Right cardiac atrium (tissue), 5 donors: ENCODE measurements at regions of chr18 and their contacts with region 1.

Region 1: DNA sequence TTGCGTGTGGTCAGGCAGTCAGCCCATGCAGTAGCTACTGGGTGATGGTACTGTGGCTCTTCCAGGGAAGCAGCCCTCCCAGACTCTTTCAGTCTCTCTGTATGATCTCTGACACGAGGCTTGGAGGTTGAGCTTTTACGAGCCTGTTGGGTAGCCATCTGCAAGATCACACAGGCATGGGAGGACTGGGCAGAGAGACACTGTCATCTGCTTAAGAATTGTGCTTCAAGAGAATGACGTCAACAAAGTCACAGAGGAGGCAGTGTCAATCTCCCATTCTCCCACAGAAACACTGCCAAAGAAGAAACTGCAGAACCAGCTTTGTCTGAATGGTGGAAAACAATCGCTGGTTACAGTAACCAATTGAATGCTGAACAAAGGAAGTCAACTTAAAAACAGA is 78.4 kb upstream of the MC2R start:
- DNase-seq: no peak
- ATAC-seq: no peak
- H3K4me3 ChIP-seq: no peak overlapping the region
- H3K27ac ChIP-seq: no peak overlapping the region
- H3K4me1 ChIP-seq: no peaks in the 10 kb centered on the region
- H3K27me3 ChIP-seq: no peaks in the 10 kb centered on the region

Region 2: DNA sequence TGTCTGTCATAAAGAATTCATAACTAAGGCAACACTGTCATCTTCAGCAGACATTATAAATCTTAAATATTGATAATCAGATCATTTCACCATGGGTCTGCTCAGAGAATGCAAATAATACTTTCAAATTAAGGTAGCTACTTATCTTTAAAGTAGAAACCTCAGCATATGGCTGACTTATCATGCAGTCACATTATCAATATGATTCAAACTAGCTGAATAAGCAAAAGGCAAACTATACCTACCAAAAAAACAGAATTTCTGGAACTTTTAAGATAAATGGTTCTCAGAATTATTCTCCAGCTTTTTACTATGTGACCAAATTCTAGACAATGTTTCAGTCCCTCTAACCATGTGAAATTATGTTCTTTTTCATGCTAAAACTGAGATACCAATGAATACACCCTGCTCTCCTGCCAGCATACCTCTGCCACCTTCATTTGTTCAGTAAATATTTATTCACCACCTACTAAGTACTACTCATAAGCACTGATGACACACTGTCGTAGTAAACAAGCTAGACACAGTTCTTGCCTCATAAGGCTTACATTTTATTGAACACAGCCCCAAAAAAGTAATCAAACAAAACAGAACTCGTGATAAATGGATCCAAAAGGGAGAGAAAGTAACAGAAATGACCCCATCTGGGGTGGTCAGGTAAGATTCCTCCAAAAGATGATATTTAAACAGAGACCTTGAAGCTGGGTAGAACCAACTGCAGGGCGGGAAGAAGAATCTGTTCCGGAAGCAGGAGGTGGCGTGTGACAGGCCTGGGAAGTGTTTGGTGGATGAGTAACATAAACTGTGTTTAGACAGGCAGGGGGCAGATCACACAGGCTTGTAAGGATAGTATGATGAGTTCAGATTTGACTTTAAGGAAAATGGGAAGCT is 1353.5 kb before region 1 on chr18:
- intact Hi-C with region 1: no loop called
- DNase-seq: peak in 1 of 3 donors; percentile 51
- ATAC-seq: peak; percentile 77 to 81
- H3K4me3 ChIP-seq: no peak overlapping the region
- H3K27ac ChIP-seq: peak overlapping the region; percentile 94
- H3K4me1 ChIP-seq: peaks cover 6% of the 10 kb centered on the region
- H3K27me3 ChIP-seq: no peaks in the 10 kb centered on the region

Region 3: DNA sequence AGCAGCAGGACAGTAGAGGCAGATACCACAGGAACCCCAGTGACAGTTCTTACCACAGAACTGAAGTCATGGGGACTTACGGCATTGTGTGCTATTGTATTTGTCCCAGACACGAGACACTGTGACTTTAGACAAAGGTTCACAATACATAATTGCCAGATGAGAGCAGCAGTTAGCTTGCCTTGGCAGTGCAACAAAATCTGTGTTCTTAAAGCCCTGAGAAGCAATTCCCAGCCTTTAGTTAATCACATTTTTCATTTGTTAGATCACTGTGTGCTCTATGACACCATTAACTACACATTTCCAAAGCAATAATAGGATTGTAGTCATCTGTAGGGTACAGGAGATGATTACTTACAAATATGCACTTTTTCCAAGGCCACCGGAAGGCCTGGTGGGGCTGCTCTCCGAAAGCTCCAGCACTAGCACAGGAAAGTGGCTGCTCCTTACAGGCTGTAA is 872.7 kb before region 1 on chr18:
- intact Hi-C with region 1: loop called in 1 of 4 experiments (anchors 10 kb)
- DNase-seq: no peak
- ATAC-seq: peak in 1 of 2 donors; percentile 26
- H3K4me3 ChIP-seq: no peak overlapping the region
- H3K27ac ChIP-seq: no peak overlapping the region
- H3K4me1 ChIP-seq: no peaks in the 10 kb centered on the region
- H3K27me3 ChIP-seq: no peaks in the 10 kb centered on the region